Left ventricle myocardium superior (tissue), 1 donor: ENCODE measurements at regions of chr15 and their contacts with region 1.

Region 1: DNA sequence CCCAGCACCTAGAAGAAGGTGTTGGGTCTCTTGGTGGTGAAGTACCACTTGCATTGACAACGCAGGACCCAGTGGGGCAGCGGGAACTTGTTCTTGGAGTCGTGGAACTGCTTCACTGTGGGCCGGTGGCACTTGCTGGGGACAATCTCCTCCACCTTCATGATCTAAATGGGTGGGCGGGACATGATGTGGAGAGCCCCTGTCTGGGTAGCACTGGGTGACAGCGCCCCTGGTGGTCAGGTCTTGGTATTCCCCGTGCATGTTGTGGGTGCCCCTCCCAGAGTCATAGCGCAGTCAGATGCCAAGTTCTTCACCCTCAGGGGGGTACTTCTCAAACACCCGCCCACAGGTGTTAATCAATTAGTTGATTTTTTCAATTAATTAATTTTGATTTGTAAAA is 60.2 kb downstream of the AGBL1 start:
- DNase-seq: no peak
- ATAC-seq: no peak

Region 2: GRCh38 chr15:86193716-86194380 is 54.0 kb after region 1 on chr15:
- intact Hi-C with region 1: loop called (anchors 10 kb)
- DNase-seq: no peak
- ATAC-seq: no peak

Region 3: GRCh38 chr15:86316726-86317383 is 177.0 kb after region 1 on chr15:
- intact Hi-C with region 1: no loop called
- DNase-seq: no peak
- ATAC-seq: peak; percentile 26